ENCODE measurements at regions of chr18 and their contacts with region 1.

Region 1: DNA sequence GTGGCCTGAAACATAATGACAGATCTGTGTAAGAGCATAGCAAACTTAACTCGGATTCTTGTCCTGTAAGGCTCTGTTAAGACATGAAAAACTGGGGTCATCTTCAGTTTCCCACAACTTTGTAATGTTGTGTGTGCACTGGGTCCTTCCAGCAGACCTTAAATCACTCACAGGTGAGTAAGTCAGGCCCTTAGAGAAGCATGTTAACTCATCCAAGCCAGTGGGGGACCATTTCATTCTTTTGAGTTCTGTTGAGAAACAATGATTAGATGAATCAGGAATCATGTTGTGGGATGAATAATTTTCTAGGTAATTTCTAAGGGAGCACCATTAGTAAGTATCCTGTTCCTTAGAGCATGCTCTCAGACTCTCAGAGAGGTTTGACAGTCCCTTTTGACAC is 167.1 kb downstream of the ESCO1 start:
- DNase-seq: no peak
- H3K4me3 ChIP-seq: no peak overlapping the region
- H3K27ac ChIP-seq: no peak overlapping the region
- H3K4me1 ChIP-seq: no peaks in the 10 kb centered on the region
- H3K27me3 ChIP-seq: no peaks in the 10 kb centered on the region
- CTCF ChIP-seq: no peak
- POLR2A ChIP-seq: no peak

Region 2: GRCh38 chr18:21012308-21012707 is 421.1 kb before region 1 on chr18:
- intact Hi-C with region 1: loop called (anchors 5 kb)
- DNase-seq: no peak
- H3K4me3 ChIP-seq: no peak overlapping the region
- H3K27ac ChIP-seq: no peak overlapping the region
- H3K4me1 ChIP-seq: no peaks in the 10 kb centered on the region
- H3K27me3 ChIP-seq: no peaks in the 10 kb centered on the region
- CTCF ChIP-seq: no peak
- POLR2A ChIP-seq: no peak

Region 3: DNA sequence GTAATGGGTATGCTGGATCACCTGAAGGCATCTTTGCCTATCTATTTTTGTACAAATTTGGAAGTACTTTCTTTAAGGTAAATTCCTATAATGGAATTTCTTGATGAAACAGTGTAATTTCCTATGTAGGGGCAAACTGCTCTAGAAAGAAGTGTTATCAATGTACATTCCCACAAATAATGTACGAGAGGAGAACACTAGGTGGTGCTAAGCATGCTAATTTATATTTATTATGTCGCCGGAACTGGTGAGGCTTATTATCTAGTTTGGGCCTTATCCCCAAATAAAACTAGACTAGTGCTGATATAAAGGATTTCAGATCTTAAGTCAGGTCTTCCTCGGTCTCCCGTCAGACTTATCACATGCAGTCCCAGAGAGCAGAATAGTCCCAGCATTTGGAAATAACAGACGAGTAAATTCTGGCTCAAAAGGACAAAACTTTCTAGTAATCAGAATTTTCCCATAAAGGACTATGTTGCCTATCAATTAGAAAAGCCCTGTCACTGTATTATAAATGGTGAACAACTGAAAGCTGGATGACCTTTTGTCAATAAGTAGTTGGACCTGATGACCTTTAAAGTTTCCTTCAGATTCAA is 1412.8 kb after region 1 on chr18:
- intact Hi-C with region 1: no loop called
- DNase-seq: no peak
- H3K4me3 ChIP-seq: no peak overlapping the region
- H3K27ac ChIP-seq: peak overlapping the region; percentile 52 to 60
- H3K4me1 ChIP-seq: peaks cover 5 to 18% of the 10 kb centered on the region in 2 donors
- H3K27me3 ChIP-seq: no peaks in the 10 kb centered on the region
- CTCF ChIP-seq: peak; percentile 34 to 46 (median 44)
- POLR2A ChIP-seq: no peak

Measured in breast epithelium (tissue), 4 donors.